Sigmoid colon (tissue), 7 donors: ENCODE measurements at regions of chr15 and their contacts with region 1.

Region 1: GRCh38 chr15:74842581-74843444 is at the start of gene ULK3:
- DNase-seq: peak; percentile 96
- H3K4me3 ChIP-seq: peak within 1 kb of the TSS; percentile 61 to 92 (median 78)
- H3K27ac ChIP-seq: peak within 1 kb of the TSS; percentile 83 to 88 (median 85)
- H3K4me1 ChIP-seq: peaks cover 0 to 32% (median 23%) of the 10 kb centered on the region in 4 donors
- H3K27me3 ChIP-seq: no peaks in the 10 kb centered on the region
- CTCF ChIP-seq: peak; percentile 35 to 78 (median 54)
- EP300 ChIP-seq: peak in 1 of 4 donors; percentile 40
- POLR2A ChIP-seq: peak in 1 of 2 donors; percentile 17
- total RNA-seq, gene ULK3: 21.1 to 46.8 (median 30.6) TPM

Region 2: DNA sequence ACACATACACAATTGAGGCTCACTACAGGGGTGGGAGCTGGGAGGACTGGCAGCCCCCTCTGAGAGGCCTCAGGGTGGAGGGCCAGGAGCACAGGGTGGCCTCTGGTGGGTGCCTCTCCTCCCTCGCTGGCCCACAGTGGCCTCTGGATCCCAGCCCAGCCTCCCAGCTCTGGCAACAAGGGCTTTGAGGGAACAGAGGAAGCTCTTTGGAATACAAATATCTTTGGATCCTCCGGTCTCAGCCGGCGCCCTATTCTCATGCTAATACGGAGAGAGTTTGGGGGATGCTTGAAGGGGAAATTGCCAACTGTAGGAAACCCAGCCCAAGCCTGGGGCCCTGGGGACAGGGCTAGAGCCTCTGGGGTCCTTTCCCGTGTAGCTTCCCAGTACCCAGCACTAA is 1056.3 kb before region 1 on chr15:
- intact Hi-C with region 1: no loop called
- DNase-seq: no peak
- H3K4me3 ChIP-seq: no peak overlapping the region
- H3K27ac ChIP-seq: no peak overlapping the region
- H3K4me1 ChIP-seq: no peaks in the 10 kb centered on the region
- H3K27me3 ChIP-seq: no peaks in the 10 kb centered on the region
- CTCF ChIP-seq: no peak
- EP300 ChIP-seq: no peak
- POLR2A ChIP-seq: no peak

Region 3: GRCh38 chr15:74184276-74185091 is 658.3 kb before region 1 on chr15:
- intact Hi-C with region 1: no loop called
- DNase-seq: no peak
- H3K4me3 ChIP-seq: no peak overlapping the region
- H3K27ac ChIP-seq: no peak overlapping the region
- H3K4me1 ChIP-seq: peaks cover 0 to 12% (median 6%) of the 10 kb centered on the region in 4 donors
- H3K27me3 ChIP-seq: no peaks in the 10 kb centered on the region
- CTCF ChIP-seq: no peak
- EP300 ChIP-seq: no peak
- POLR2A ChIP-seq: no peak

Region 4: GRCh38 chr15:74781431-74782258 is 61.2 kb before region 1 on chr15 and contains the start of gene CSK:
- intact Hi-C with region 1: loop called (anchors 1 kb)
- DNase-seq: peak; percentile 86
- H3K4me3 ChIP-seq: peak within 1 kb of the TSS; percentile 48 to 92 (median 78)
- H3K27ac ChIP-seq: peak within 1 kb of the TSS; percentile 77 to 93 (median 82)
- H3K4me1 ChIP-seq: peaks cover 0 to 60% (median 46%) of the 10 kb centered on the region in 4 donors
- H3K27me3 ChIP-seq: no peaks in the 10 kb centered on the region
- CTCF ChIP-seq: peak in 3 of 4 experiments; percentile 14 to 54 (median 26)
- EP300 ChIP-seq: no peak
- POLR2A ChIP-seq: no peak
- total RNA-seq, gene CSK: 9.7 to 22.4 (median 14.2) TPM

Region 5: DNA sequence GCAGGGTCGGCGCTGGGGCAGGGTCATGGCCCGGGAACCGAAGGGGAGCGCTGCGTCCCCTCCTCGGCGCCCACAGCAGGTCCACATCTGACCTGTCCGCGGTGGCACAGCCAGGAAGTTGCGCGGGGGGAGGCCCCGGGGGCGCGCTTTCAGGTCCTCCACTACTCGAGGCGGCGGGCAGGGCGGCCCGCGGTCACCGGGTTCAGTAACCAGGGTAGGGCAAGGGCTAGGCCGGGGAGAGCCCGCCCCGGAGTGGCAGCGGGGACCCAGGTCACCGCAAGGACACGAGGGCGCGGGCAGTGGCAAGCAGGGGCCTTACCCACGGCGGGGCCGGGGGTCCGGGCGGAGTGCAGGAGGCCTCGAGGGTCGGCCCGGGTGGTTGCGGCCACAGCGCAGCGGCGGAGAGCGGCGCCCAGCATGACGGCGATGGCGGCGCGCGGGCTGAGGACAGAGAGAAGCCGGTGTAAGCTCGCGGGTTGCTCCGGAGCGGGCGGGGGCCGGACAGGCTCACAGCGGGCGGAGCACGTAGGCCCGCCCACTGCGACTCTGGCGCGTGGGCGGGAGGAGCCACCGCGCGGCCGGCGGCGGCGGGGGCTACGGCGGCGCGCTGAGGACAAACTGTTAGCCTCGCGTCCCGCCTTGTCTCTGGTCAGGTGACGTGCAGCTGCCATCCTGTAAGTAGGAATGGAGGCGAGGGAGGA is 94.9 kb after region 1 on chr15 and contains the start of gene COX5A:
- intact Hi-C with region 1: loop called (anchors 5 kb)
- DNase-seq: peak; percentile 97
- H3K4me3 ChIP-seq: peak within 1 kb of the TSS; percentile 84 to 95 (median 92)
- H3K27ac ChIP-seq: peak within 1 kb of the TSS; percentile 91 to 97 (median 96)
- H3K4me1 ChIP-seq: peaks cover 2 to 39% (median 28%) of the 10 kb centered on the region in 4 donors
- H3K27me3 ChIP-seq: no peaks in the 10 kb centered on the region
- CTCF ChIP-seq: no peak
- EP300 ChIP-seq: peak in 1 of 4 donors; percentile 9
- POLR2A ChIP-seq: peak in 1 of 2 donors; percentile 42
- total RNA-seq, gene COX5A: 73.7 to 124 (median 81.6) TPM

Region 6: GRCh38 chr15:74956648-74957300 is 114.0 kb after region 1 on chr15 and contains the start of gene RPP25:
- intact Hi-C with region 1: loop called (anchors 5 kb)
- DNase-seq: peak; percentile 90
- H3K4me3 ChIP-seq: peak within 1 kb of the TSS; percentile 33 to 65 (median 56)
- H3K27ac ChIP-seq: peak within 1 kb of the TSS; percentile 68 to 84 (median 70)
- H3K4me1 ChIP-seq: peaks cover 0 to 51% (median 40%) of the 10 kb centered on the region in 4 donors
- H3K27me3 ChIP-seq: peaks cover 20 to 63% (median 30%) of the 10 kb centered on the region in 3 donors
- CTCF ChIP-seq: no peak
- EP300 ChIP-seq: no peak
- POLR2A ChIP-seq: no peak
- total RNA-seq, gene RPP25: 3.7 to 4.8 (median 4.7) TPM

Region 7: DNA sequence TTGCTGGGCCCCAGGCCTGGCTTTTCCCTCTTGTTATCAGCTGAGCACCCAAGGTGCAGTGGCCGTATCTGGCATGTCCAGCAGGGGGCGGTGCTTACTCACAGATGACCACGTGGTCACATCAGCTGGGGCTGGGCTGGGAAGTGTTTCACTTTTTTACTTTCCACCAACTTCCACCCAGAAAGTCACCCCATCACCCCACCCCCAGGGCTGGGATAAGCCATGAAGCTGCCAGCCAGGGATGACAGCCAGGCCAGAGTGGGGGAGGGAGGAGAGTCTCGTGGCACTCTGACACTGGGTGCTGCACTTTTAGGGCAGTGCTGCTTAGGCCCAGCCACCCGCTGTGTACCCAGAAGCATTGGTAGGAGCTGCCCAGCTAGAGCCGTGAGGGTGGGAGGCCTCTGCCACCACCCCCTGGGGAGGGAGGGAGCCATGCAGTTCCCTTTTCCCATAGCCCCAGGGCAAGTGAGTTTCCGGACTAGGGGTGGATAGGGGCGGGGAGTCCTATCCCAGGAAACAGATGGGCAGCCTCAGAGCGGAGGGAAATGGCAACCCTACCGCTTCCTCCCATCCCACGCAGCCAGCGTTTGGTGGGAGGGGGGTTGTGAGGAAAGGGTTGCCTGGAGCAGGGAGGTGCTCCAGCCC is 186.7 kb after region 1 on chr15:
- intact Hi-C with region 1: no loop called
- DNase-seq: peak; percentile 96
- H3K4me3 ChIP-seq: peak overlapping the region in 3 of 4 donors; percentile 18 to 31 (median 24)
- H3K27ac ChIP-seq: peak overlapping the region; percentile 68 to 76 (median 71)
- H3K4me1 ChIP-seq: peaks cover 0 to 35% (median 25%) of the 10 kb centered on the region in 4 donors
- H3K27me3 ChIP-seq: no peaks in the 10 kb centered on the region
- CTCF ChIP-seq: peak; percentile 91 to 95 (median 94)
- EP300 ChIP-seq: peak in 1 of 4 donors; percentile 3
- POLR2A ChIP-seq: no peak